AG04450 (cell line): ENCODE measurements at regions of chr11 and their contacts with region 1.

Region 1: GRCh38 chr11:84384731-84385130 is 1098.6 kb upstream of the CCDC90B start:
- DNase-seq: peak; percentile 3
- H3K4me3 ChIP-seq: no peak overlapping the region
- H3K27ac ChIP-seq: no peak overlapping the region
- H3K27me3 ChIP-seq: no peaks in the 10 kb centered on the region
- CTCF ChIP-seq: peak; percentile 89

Region 2: DNA sequence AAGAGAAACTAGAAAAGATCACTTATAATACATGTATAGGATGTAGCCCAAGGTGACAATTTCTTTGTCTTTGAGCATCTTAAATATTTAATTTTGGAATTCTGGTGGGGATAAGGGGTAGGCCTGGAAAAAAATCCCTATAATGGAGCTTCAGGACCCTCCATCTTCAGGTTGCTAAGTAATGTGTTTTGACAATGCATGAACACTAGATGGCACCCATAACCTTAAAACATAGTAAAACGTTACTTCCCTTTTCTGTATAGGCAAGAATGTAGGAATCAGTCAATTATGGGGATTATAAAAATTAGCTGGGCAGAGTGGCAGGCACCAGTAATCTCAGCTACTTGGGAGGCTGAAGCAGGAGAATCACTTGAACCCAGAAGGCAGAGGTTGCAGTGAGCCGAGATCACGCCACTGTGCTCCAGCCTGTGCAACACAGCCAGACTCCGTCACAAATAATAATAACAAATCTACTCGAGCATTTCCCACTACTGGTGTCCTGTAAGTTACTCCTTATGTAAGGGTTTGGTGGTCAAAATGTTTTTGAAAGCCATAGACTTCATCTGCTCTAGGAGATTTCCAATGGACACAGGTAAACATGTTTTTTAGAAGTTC is 556.7 kb before region 1 on chr11:
- CTCF ChIA-PET with region 1: interaction called, 18 read pairs
- POLR2A ChIA-PET with region 1: no interaction called
- DNase-seq: no peak
- H3K4me3 ChIP-seq: peak overlapping the region; percentile 37
- H3K27ac ChIP-seq: peak overlapping the region; percentile 65
- H3K27me3 ChIP-seq: no peaks in the 10 kb centered on the region
- CTCF ChIP-seq: peak; percentile 67

Region 3: DNA sequence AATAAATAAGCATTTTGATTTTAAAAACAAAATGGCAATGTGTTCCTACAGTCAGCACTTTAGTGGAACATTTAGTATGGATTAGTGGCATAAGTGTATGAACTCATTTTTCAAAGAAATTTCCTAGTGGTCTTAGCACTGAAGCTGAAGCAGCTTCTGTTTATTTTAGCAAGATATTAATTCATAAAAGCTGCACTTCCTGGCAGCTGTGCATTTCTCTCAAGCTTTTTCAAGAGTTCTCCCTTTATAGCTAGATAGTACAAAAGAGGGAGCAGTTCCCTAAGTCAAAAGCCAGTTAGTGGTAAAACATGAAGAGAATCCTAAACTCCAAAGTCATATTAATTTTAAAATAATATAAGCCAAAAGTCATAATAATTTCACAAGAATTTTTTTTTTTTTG is 62.5 kb before region 1 on chr11:
- CTCF ChIA-PET with region 1: no interaction called
- POLR2A ChIA-PET with region 1: no interaction called
- DNase-seq: no peak
- H3K4me3 ChIP-seq: no peak overlapping the region
- H3K27ac ChIP-seq: no peak overlapping the region
- H3K27me3 ChIP-seq: no peaks in the 10 kb centered on the region
- CTCF ChIP-seq: no peak

Region 4: DNA sequence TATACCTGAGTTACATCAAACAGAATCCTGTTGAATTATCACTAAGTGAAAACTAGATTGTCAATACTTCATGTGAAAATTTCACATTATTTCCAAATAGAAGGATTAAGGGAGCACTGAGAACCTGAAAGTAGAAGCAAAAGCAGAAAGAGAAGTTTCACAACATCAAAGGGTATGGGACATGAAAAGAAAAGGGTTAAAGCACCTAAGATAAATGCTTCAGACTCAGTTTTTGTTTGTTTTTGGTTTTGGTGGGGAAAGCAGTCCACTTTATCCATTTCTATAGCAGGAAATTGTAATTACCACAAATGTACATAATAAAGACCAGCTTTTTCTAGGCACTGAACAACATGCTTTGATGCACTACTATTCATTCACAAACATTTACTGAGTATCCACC is 28.8 kb before region 1 on chr11:
- CTCF ChIA-PET with region 1: interaction called, 13 read pairs
- POLR2A ChIA-PET with region 1: no interaction called
- DNase-seq: no peak
- H3K4me3 ChIP-seq: no peak overlapping the region
- H3K27ac ChIP-seq: no peak overlapping the region
- H3K27me3 ChIP-seq: no peaks in the 10 kb centered on the region
- CTCF ChIP-seq: no peak

Region 5: GRCh38 chr11:84372381-84372950 is 12.3 kb before region 1 on chr11:
- CTCF ChIA-PET with region 1: interaction called, 12 read pairs
- POLR2A ChIA-PET with region 1: no interaction called
- DNase-seq: no peak
- H3K4me3 ChIP-seq: no peak overlapping the region
- H3K27ac ChIP-seq: no peak overlapping the region
- H3K27me3 ChIP-seq: no peaks in the 10 kb centered on the region
- CTCF ChIP-seq: no peak

Region 6: DNA sequence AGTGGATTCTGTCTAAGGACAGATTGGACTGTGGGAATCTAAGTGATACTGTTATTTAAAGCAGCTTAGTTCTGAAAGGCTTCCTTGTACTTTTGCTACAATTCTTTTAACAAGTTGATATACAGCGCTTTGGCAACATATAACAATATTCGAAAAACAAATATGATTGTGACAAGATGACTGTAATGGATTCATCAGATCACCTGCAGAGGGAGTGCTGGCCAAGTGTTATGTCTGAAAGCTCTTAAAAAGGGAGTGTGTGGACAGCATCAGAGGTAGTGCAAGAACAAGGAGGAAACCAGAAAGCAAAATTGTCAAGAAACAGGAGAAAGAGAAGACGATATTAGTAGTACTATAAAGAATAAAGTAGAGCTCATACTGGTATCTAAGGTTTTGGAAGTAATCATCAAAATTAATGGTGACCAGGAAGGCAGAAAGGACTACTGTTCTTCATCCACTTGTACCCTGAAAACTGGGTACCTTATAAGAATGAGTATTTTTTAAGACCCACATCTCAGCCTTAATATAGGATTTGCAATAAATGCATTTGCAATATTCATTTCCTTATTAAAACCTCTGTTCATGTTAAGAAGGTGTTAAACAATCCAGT is 13.4 kb after region 1 on chr11:
- CTCF ChIA-PET with region 1: interaction called, 11 read pairs
- POLR2A ChIA-PET with region 1: no interaction called
- DNase-seq: no peak
- H3K4me3 ChIP-seq: no peak overlapping the region
- H3K27ac ChIP-seq: no peak overlapping the region
- H3K27me3 ChIP-seq: no peaks in the 10 kb centered on the region
- CTCF ChIP-seq: peak; percentile 37

Region 7: GRCh38 chr11:84524422-84525051 is 139.8 kb after region 1 on chr11:
- CTCF ChIA-PET with region 1: interaction called, 22 read pairs
- POLR2A ChIA-PET with region 1: no interaction called
- DNase-seq: no peak
- H3K4me3 ChIP-seq: no peak overlapping the region
- H3K27ac ChIP-seq: no peak overlapping the region
- H3K27me3 ChIP-seq: no peaks in the 10 kb centered on the region
- CTCF ChIP-seq: peak; percentile 62